Caco-2 (cell line): ENCODE measurements at regions of chr9 and their contacts with region 1.

Region 1: GRCh38 chr9:113275157-113276131 is at the starts of genes CDC26 and PRPF4:
- DNase-seq: peak; percentile 97 to 98
- H3K4me3 ChIP-seq: peak within 1 kb of the TSS; percentile 93
- H3K4me3 Mint-ChIP-seq: no peak within 1 kb of the TSS
- H3K27ac Mint-ChIP-seq: no peak within 1 kb of the TSS
- H3K4me1 ChIP-seq: no peaks in the 10 kb centered on the region
- H3K4me1 Mint-ChIP-seq: no peaks in the 10 kb centered on the region
- H3K27me3 ChIP-seq: no peaks in the 10 kb centered on the region
- H3K27me3 Mint-ChIP-seq: no peaks in the 10 kb centered on the region
- CTCF ChIP-seq: no peak
- total RNA-seq, gene CDC26: 27.3 and 29.3 TPM in 2 replicates
- total RNA-seq, gene PRPF4: 37.5 and 38.6 TPM in 2 replicates

Region 2: DNA sequence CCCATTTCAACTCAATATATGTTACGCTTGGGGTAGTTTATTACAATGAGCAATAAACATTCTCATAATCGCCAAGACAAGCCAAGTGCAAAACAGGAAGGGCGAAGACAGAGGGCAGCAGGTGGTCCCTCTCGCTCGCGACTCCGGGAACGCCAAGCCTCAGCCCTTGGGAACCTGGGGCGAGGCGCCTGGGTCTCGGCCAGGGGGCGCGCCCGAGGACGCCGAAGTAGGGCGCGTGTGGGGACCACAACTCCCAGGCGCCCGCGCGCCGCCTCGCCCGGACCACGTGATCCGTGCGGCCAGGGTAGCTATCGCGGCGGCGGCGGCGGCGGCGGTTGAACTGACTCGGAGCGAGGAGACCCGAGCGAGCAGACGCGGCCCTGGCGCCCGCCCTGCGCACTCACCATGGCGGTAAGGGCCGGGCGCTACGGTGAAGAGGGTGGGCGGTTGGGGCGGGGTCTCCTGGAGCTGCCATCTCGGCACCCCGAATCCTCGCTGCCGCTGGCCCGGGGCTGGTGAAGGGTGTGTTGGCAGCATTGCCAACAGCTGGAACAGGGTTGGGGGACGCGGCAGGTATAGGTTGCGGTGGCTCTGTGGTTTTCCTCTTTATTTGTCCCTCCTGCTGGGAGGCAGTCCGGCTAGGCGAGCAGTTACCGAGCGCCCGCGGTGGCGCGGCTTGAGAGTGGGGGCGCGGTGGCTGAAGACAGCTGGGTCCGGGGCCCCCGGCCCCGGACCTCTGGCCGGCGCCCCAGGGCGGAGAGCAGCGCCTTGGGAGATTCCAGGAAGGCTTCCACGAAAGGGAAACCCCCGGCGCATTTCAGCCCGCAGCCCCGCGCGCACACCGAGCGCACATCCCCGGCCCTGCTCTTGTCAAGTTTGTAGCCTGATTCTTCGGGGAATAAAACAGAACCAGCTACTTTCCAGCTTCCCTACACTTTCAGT is 124.5 kb before region 1 on chr9 and contains the start of gene SLC31A2:
- CTCF ChIA-PET with region 1: interaction called, 8 read pairs
- POLR2A ChIA-PET with region 1: interaction called, 7 read pairs
- intact Hi-C with region 1: loop called (anchors 5 kb)
- DNase-seq: peak; percentile 91 to 94
- H3K4me3 ChIP-seq: peak within 1 kb of the TSS; percentile 84
- H3K4me3 Mint-ChIP-seq: peak within 1 kb of the TSS; percentile 74
- H3K27ac Mint-ChIP-seq: no peak within 1 kb of the TSS
- H3K4me1 ChIP-seq: peaks cover 11% of the 10 kb centered on the region
- H3K4me1 Mint-ChIP-seq: peaks cover 21% of the 10 kb centered on the region
- H3K27me3 ChIP-seq: no peaks in the 10 kb centered on the region
- H3K27me3 Mint-ChIP-seq: peaks cover 3% of the 10 kb centered on the region
- CTCF ChIP-seq: peak; percentile 46 to 57
- total RNA-seq, gene SLC31A2: 4.7 and 5.1 TPM in 2 replicates

Region 3: DNA sequence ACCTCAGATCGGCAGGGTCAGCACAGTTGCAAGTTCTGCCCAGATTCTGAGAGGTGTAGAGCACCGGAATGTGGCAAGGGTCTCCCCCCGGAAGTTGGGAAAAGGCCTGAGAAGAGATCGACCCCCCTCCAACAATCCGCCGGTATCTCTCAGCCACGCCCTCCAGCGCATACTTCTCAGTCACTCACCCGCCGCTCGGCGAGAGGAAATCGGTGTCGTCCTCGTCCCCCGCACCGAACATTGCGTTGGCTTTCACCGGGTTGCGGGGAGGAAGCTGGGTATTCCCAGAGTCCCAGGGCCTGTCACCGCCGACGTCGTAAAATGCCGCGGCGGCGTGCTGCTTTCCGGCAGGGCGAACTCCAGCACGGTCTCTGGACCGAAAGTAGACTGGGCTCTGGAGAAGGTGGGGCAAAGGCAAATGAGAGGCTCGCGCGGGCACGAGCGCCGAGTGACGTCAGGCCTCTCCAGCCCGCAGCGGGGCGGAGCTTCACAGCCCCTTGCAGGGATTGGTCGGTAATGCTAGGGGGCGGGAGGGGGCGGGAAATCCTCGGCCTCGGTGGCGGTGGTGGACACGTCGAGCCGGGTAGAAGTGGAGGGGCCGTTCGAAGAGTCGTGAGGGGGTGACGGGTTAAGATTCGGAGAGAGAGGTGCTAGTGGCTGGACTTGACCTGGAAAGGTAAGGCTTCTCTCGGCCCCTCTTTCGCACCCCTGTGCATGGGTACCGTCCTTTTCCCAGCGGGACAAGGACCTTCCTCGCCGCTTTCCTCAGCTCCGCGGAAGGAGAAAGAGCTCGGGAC is 54.2 kb before region 1 on chr9 and contains the starts of genes FKBP15 and SLC31A1:
- CTCF ChIA-PET with region 1: interaction called, 9 read pairs
- POLR2A ChIA-PET with region 1: interaction called, 16 read pairs
- intact Hi-C with region 1: loop called (anchors 1 kb)
- DNase-seq: peak; percentile 98 to 99
- H3K4me3 ChIP-seq: peak within 1 kb of the TSS; percentile 74
- H3K4me3 Mint-ChIP-seq: peak within 1 kb of the TSS; percentile 97
- H3K27ac Mint-ChIP-seq: peak within 1 kb of the TSS; percentile 93
- H3K4me1 ChIP-seq: peaks cover 15% of the 10 kb centered on the region
- H3K4me1 Mint-ChIP-seq: peaks cover 17% of the 10 kb centered on the region
- H3K27me3 ChIP-seq: no peaks in the 10 kb centered on the region
- H3K27me3 Mint-ChIP-seq: no peaks in the 10 kb centered on the region
- CTCF ChIP-seq: no peak
- total RNA-seq, gene FKBP15: 20.1 TPM in 2 replicates
- total RNA-seq, gene SLC31A1: 57.8 and 64.9 TPM in 2 replicates

Region 4: DNA sequence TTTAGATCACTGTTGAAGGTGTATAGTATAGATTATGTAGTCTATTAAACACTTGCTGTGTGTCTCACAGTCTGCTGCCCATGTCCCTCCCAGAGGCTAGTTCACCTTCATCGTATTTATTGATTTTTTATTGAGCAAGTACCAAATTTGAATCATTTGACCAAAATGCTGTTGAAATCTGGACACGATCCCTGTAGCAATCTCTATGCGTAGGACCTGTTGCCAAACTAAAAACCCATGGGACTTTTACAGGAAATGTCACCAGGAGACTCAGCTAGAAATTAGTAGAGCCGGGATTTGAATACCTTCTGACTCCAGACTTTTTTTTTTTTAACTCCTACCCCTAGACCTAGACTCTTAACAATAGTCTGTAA is 36.6 kb before region 1 on chr9:
- CTCF ChIA-PET with region 1: no interaction called
- POLR2A ChIA-PET with region 1: no interaction called
- intact Hi-C with region 1: no loop called
- DNase-seq: no peak
- H3K4me3 ChIP-seq: no peak overlapping the region
- H3K4me3 Mint-ChIP-seq: no peak overlapping the region
- H3K27ac Mint-ChIP-seq: no peak overlapping the region
- H3K4me1 ChIP-seq: no peaks in the 10 kb centered on the region
- H3K4me1 Mint-ChIP-seq: no peaks in the 10 kb centered on the region
- H3K27me3 ChIP-seq: no peaks in the 10 kb centered on the region
- H3K27me3 Mint-ChIP-seq: no peaks in the 10 kb centered on the region
- CTCF ChIP-seq: no peak

Region 5: DNA sequence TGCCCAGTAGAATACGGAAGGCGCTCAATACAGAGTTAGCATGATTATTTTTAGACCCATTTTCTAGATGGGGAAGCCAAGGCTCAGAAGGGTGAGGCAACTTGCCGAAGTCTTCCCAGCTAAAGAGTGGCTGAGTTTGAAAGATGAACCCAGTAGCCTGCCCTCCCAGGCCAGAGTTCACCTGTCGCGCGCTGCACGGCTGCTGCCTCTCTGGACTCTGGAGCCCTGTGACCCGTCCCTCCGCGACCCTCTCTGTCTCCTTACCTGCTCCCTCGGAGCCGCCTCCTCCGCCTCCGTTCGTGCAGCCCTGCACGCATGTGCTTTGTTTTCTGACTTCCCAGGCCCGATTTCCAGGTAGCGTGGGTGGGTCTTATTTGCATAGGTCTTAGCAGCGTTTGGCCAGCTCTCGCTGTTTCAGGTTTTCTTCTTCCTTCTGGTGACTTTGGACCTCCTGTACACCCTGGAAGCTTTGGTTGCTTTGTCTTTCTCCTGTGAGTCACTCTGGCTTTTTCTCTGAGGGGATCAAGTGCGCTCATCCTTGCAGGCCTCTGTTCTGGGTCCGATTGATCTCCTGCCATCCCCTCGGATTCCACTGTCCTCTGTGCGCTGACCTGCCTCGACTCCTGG is 27.5 kb after region 1 on chr9 and contains the start of gene RNF183:
- CTCF ChIA-PET with region 1: interaction called, 4 read pairs
- POLR2A ChIA-PET with region 1: no interaction called
- intact Hi-C with region 1: loop called (anchors 2 kb)
- DNase-seq: peak; percentile 69 to 73
- H3K4me3 ChIP-seq: peak within 1 kb of the TSS; percentile 29
- H3K4me3 Mint-ChIP-seq: peak within 1 kb of the TSS; percentile 76
- H3K27ac Mint-ChIP-seq: peak within 1 kb of the TSS; percentile 93
- H3K4me1 ChIP-seq: peaks cover 14% of the 10 kb centered on the region
- H3K4me1 Mint-ChIP-seq: peaks cover 18% of the 10 kb centered on the region
- H3K27me3 ChIP-seq: no peaks in the 10 kb centered on the region
- H3K27me3 Mint-ChIP-seq: no peaks in the 10 kb centered on the region
- CTCF ChIP-seq: no peak
- total RNA-seq, gene RNF183: 1.5 and 3.3 TPM in 2 replicates

Region 6: GRCh38 chr9:113340017-113340699 is 64.7 kb after region 1 on chr9 and contains the start of gene WDR31:
- CTCF ChIA-PET with region 1: interaction called, 3 read pairs
- POLR2A ChIA-PET with region 1: interaction called, 10 read pairs
- intact Hi-C with region 1: loop called (anchors 2 kb)
- DNase-seq: peak; percentile 88 to 91
- H3K4me3 ChIP-seq: peak within 1 kb of the TSS; percentile 75
- H3K4me3 Mint-ChIP-seq: peak within 1 kb of the TSS; percentile 74
- H3K27ac Mint-ChIP-seq: peak within 1 kb of the TSS; percentile 85
- H3K4me1 ChIP-seq: no peaks in the 10 kb centered on the region
- H3K4me1 Mint-ChIP-seq: peaks cover 9% of the 10 kb centered on the region
- H3K27me3 ChIP-seq: no peaks in the 10 kb centered on the region
- H3K27me3 Mint-ChIP-seq: no peaks in the 10 kb centered on the region
- CTCF ChIP-seq: no peak
- total RNA-seq, gene WDR31: 1.9 and 2.3 TPM in 2 replicates

Region 7: DNA sequence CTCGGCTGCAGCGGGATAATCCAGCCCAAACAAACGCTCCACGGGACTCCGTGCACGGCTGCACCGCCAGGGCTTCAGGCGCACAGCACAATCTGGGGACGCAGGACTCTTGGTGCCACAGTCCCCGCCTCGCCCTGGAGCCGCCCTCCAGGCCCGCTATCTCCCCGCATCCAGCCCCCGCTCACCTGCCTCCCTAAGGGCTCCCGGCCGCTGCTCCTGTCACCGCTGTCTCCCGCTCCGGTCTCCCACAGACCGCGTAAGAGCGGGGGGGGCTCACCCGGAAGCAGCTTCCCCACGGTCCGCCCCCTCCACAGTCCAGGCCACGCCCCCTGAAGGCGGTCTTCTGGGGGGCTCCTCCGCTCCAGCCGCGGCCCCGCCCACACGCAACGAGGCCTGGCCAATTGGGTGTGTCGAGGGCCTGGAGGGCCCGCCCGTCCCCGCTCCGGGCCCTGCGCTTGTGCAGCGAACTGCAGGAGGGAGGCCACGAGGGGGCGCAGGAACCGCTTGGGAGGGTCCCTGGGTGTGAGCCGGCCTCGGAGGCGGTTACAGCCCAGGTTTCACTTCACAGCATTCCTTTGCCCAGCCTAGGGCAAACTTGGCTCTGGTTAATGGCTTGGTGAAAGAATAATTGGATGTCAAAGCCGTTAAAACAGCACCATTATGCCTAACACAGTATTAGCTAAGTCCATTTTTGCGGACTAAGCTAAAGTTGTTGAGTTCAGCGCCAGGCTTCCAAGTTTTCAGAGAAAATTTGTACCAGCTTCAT is 125.8 kb after region 1 on chr9 and contains the start of gene ALAD:
- CTCF ChIA-PET with region 1: interaction called, 8 read pairs
- POLR2A ChIA-PET with region 1: interaction called, 6 read pairs
- intact Hi-C with region 1: loop called (anchors 1 kb)
- DNase-seq: peak; percentile 99 to 100
- H3K4me3 ChIP-seq: peak within 1 kb of the TSS; percentile 72
- H3K4me3 Mint-ChIP-seq: peak within 1 kb of the TSS; percentile 88
- H3K27ac Mint-ChIP-seq: peak within 1 kb of the TSS; percentile 70
- H3K4me1 ChIP-seq: peaks cover 36% of the 10 kb centered on the region
- H3K4me1 Mint-ChIP-seq: peaks cover 19% of the 10 kb centered on the region
- H3K27me3 ChIP-seq: no peaks in the 10 kb centered on the region
- H3K27me3 Mint-ChIP-seq: no peaks in the 10 kb centered on the region
- CTCF ChIP-seq: peak; percentile 92 to 95
- total RNA-seq, gene ALAD: 43.6 and 48.8 TPM in 2 replicates

Region 8: GRCh38 chr9:113657703-113658544 is 382.5 kb after region 1 on chr9:
- CTCF ChIA-PET with region 1: interaction called, 14 read pairs
- POLR2A ChIA-PET with region 1: interaction called, 3 read pairs
- intact Hi-C with region 1: loop called (anchors 1 kb)
- DNase-seq: peak; percentile 84 to 87
- H3K4me3 ChIP-seq: no peak overlapping the region
- H3K4me3 Mint-ChIP-seq: no peak overlapping the region
- H3K27ac Mint-ChIP-seq: no peak overlapping the region
- H3K4me1 ChIP-seq: no peaks in the 10 kb centered on the region; the same call in 1 of the 2 replicates
- H3K4me1 Mint-ChIP-seq: no peaks in the 10 kb centered on the region
- H3K27me3 ChIP-seq: no peaks in the 10 kb centered on the region
- H3K27me3 Mint-ChIP-seq: peaks cover 7% of the 10 kb centered on the region
- CTCF ChIP-seq: peak; percentile 93 to 97